ENCODE measurements at regions of chr19 and their contacts with region 1.

Region 1: DNA sequence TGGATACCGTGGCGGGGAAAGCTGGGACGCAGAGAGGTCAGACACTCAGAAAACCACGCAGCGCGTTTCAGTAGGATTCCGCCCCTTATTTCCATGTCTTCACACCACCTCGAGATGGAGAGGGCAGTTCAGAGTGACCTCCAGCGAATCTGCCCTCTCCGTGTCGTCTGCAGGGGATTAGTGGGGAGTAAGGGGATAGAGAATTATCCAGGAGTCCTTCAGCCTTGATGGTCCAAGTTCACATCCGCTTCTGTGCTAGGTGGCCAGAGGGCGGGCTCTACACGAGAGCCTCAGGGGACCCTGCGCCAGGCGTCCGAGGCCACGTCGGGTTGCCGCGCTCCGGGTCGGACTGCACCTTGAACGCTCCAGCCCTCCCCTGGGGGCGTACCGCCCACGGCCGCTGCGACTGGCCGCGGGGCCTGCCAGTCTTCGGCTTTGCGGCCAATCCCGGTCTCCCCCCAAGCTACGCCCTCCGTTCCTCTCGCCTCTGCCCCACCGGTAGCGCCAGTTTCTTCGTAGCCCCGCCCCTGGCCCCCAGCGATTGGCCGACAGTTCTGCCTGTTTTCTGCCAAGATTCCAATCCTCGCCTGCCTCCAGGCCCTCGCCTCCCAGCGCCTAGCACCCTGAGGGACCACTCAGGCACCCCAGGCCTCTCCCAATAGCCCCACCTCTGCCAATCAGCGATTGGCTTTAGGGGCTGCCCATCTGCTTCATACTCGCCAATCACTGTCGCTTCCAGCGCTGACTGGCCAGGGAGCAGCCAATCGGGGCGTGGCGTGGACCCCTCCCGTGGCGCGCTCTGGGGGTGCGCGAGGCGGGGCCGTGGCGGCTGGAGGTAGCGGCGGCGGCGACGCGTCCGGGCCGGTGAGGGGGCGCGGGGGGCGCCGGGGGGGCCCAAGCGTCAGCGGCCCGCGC is at the start of gene SLC25A42:
- DNase-seq: peak; percentile 99
- H3K4me3 Mint-ChIP-seq: peak within 1 kb of the TSS; percentile 83
- H3K27ac Mint-ChIP-seq: peak within 1 kb of the TSS; percentile 5
- H3K4me1 Mint-ChIP-seq: peaks cover 15% of the 10 kb centered on the region
- H3K27me3 Mint-ChIP-seq: no peaks in the 10 kb centered on the region
- CTCF ChIP-seq: no peak
- total RNA-seq, gene SLC25A42: 3.1 and 3.7 TPM in 2 replicates

Region 2: DNA sequence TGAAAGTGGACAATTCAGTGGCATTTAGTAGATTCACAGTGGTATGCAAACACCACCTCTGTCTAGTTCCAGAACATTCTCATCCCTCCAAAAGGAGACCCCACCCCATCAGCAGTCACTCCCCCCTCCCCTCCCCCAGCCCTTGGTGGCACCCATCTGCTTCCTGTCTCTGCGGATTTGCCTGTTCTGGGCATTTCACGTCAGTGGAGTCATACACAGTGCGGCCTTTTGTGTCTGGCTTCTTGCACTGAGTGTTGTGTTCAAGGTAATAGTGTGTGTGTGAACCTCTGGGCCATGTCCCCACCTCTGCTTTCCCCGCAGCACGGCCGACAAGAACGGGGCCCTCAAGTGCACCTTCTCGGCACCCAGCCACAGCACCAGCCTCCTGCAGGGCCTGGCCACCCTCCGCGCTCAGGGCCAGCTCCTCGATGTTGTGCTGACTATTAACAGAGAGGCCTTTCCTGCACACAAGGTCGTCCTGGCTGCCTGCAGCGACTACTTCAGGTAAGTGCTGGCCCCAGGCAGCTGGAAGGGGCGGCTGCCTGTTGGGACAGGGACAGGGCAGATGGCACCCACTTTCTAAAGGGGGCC is 399.4 kb before region 1 on chr19:
- CTCF ChIA-PET with region 1: no interaction called
- POLR2A ChIA-PET with region 1: no interaction called
- intact Hi-C with region 1: no loop called
- DNase-seq: no peak
- H3K4me3 Mint-ChIP-seq: no peak overlapping the region
- H3K27ac Mint-ChIP-seq: no peak overlapping the region
- H3K4me1 Mint-ChIP-seq: no peaks in the 10 kb centered on the region
- H3K27me3 Mint-ChIP-seq: no peaks in the 10 kb centered on the region
- CTCF ChIP-seq: no peak

Region 3: GRCh38 chr19:19138169-19138981 is 74.9 kb after region 1 on chr19 and contains the start of gene TMEM161A:
- CTCF ChIA-PET with region 1: interaction called, 3 read pairs
- POLR2A ChIA-PET with region 1: interaction called, 3 read pairs
- intact Hi-C with region 1: loop called (anchors 5 kb)
- DNase-seq: peak; percentile 99
- H3K4me3 Mint-ChIP-seq: peak within 1 kb of the TSS; percentile 97
- H3K27ac Mint-ChIP-seq: peak within 1 kb of the TSS; percentile 98
- H3K4me1 Mint-ChIP-seq: peaks cover 11% of the 10 kb centered on the region
- H3K27me3 Mint-ChIP-seq: no peaks in the 10 kb centered on the region
- CTCF ChIP-seq: no peak
- total RNA-seq, gene TMEM161A: 34.8 and 36.1 TPM in 2 replicates